HEK293 (cell line): ENCODE measurements at regions of chr5 and their contacts with region 1.

Region 1: DNA sequence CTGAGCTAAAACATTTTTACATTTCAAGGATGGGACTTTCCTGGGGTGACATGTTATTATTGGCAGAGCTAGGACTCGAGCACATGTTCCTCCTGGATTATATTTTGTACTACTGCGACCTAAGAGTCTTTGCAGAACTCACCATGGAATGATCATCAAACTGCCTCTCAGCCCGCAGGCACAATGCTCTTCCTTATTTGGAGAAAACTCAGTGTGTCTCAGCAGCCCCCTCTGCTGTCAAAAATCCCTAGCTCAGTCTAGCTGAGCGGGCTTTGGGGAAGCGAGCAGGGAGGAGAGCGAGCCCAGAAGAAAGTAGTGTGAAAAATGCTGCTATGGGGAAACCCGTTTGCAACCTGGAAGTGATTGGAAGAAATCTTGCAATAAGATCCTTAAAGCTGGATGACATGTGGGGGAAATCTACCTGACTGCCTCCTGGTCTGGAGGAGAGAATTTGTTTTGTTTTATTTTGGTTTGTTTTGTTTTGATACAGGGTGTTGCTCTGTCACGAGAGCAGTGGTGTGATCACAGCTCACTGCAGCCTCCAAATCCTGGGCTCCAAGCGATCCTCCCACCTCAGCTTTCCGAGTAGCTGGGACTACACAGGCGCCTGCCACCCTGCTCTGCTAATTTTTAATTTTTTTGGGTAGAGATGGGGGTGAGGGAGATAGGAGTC is 89.9 kb upstream of the CLINT1 start:
- H3K4me3 ChIP-seq: no peak overlapping the region
- H3K27ac ChIP-seq: no peak overlapping the region
- H3K4me1 ChIP-seq: peaks cover 3% of the 10 kb centered on the region; the same call in 1 of the 2 replicates
- CTCF ChIP-seq: peak; percentile 71

Region 2: GRCh38 chr5:157820593-157821252 is 128.2 kb before region 1 on chr5:
- CTCF ChIA-PET with region 1: interaction called, 10 read pairs
- POLR2A ChIA-PET with region 1: no interaction called
- H3K4me3 ChIP-seq: no peak overlapping the region
- H3K27ac ChIP-seq: peak overlapping the region; percentile 7; the same call in 1 of the 2 replicates
- H3K4me1 ChIP-seq: peaks cover 9% of the 10 kb centered on the region
- CTCF ChIP-seq: no peak

Region 3: DNA sequence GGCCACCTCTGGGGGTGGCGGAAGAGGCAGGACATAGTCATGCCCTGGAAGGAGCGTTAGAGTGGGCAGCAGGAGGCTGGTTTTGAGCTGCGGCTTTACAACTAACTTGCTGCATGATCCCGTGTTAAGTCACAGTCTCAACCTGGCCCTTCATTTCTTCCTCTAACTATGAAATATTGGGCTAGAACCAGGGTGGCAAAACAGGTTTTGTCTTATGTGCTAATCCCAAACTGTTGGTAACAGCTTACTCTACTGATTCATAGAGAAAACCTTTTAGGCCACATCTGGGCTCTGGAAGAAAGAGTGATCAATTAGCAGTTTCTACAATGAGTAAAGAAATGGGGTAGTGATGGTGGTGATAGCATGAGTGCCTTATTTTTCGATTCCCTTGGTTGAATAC is 15.9 kb before region 1 on chr5:
- CTCF ChIA-PET with region 1: interaction called, 12 read pairs
- POLR2A ChIA-PET with region 1: no interaction called
- H3K4me3 ChIP-seq: no peak overlapping the region
- H3K27ac ChIP-seq: no peak overlapping the region
- H3K4me1 ChIP-seq: no peaks in the 10 kb centered on the region
- CTCF ChIP-seq: no peak

Region 4: GRCh38 chr5:157961828-157962590 is 13.1 kb after region 1 on chr5:
- CTCF ChIA-PET with region 1: interaction called, 27 read pairs
- POLR2A ChIA-PET with region 1: no interaction called
- H3K4me3 ChIP-seq: no peak overlapping the region
- H3K27ac ChIP-seq: no peak overlapping the region
- H3K4me1 ChIP-seq: peaks cover 10% of the 10 kb centered on the region
- CTCF ChIP-seq: no peak